ENCODE measurements at regions of chr4 and their contacts with region 1.

Region 1: DNA sequence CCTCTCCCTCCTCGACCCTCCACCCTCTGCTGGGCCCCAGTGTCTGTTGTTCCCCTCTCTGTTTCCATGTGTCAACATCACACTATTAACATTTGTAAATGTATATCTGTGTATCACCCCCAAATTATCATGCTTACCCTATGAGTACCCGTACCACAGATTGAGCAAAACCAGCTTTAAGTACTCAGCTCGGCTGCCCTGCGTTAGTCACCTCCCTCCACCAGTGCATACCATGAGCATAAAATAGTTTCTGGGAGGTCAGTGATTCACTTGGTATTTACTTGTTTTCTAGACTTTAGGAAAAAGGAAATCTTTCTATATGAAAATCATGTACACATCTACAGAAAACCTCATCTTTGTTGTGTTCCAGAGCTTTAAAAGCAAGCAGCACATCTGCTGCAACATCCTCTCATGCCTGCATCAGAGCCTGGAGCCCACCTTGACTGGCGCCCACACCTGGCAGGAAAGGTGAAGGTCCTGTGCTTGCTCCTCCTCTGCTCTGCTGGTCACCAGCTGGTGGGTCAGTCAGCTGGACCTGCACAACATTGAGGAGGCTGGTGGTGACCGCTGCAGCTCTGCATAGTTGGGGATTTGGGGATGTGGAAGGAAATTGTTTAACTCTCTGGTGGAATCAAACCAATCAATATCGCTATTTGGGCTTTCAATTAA is 214.4 kb upstream of the KLF3 start:
- DNase-seq: no peak
- ATAC-seq: peak; percentile 58; the same call in 1 of the 2 replicates
- H3K4me3 ChIP-seq: no peak overlapping the region
- H3K27ac ChIP-seq: no peak overlapping the region
- H3K4me1 ChIP-seq: no peaks in the 10 kb centered on the region
- H3K27me3 ChIP-seq: no peaks in the 10 kb centered on the region
- CTCF ChIP-seq: peak; percentile 10 to 37 (median 36); a peak in 3 of 6 replicates
- POLR2A ChIP-seq: no peak
- RAD21 ChIP-seq: peak; percentile 26; the same call in 1 of the 2 replicates

Region 2: GRCh38 chr4:38189445-38189844 is 260.2 kb before region 1 on chr4:
- CTCF ChIA-PET with region 1: no interaction called
- POLR2A ChIA-PET with region 1: no interaction called
- RAD21 ChIA-PET with region 1: no interaction called
- intact Hi-C with region 1: loop called (anchors 5 kb)
- DNase-seq: peak; percentile 90
- ATAC-seq: peak; percentile 79
- H3K4me3 ChIP-seq: peak overlapping the region; percentile 10 to 46
- H3K27ac ChIP-seq: peak overlapping the region; percentile 63
- H3K4me1 ChIP-seq: peaks cover 33 to 36% of the 10 kb centered on the region in 2 experiments
- H3K27me3 ChIP-seq: no peaks in the 10 kb centered on the region
- CTCF ChIP-seq: no peak
- POLR2A ChIP-seq: no peak
- RAD21 ChIP-seq: peak; percentile 18; the same call in 1 of the 2 replicates

Measured in HCT116 (cell line).